ENCODE measurements at regions of chr12 and their contacts with region 1.

Region 1: DNA sequence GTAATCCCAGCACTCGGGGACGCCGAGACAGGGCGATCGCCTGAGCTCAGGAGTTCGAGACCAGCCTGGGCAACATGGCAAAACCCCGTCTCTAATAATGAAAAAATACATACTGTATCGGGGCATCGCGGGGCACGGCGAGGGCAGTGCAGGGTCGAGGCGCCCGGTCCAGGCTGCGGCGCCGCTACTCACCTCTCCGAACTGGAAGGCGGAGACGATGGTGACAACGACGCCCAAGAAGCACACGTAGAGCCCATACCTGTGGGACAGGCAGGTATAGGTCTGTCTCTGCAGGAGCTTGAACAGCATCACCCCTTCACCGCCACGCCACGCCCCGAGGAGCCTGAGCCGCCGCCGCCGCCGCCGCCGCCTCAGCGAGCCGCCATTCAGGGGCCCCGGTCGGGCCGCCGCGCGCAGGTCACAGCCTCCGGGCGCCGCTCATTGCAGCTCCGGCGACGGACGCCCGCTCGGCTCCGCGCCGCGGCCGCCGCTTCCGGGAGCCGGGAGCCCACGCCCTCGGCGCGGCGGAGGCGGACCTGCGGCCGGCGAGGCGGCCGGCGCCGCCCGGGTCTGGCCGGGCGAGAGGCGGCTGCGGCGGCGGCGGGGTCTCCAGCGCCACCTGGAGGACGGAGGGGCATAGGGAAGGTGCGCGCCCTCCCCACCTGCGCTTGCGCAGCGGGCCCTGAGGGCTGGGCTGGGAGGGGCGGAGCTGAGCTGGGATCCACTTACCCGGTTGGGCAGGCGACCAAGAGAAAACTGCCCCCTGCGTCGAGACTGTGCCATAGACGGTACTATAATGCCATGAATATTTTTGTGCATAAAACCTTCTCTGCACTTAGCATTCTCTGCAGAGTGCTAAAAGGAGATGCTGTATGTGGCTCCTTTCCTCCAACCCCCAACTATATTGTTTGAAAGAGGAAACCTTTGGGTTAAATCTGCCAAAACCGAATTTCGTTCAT is at the start of gene GNPTAB:
- DNase-seq: peak; percentile 96
- H3K4me3 ChIP-seq: peak within 1 kb of the TSS; percentile 88 to 98 (median 90)
- H3K27ac ChIP-seq: peak within 1 kb of the TSS; percentile 85 to 89 (median 86)
- H3K4me1 ChIP-seq: peaks cover 18 to 50% (median 41%) of the 10 kb centered on the region in 4 donors
- H3K27me3 ChIP-seq: no peaks in the 10 kb centered on the region
- CTCF ChIP-seq: peak; percentile 79 to 94 (median 86)
- EP300 ChIP-seq: no peak
- POLR2A ChIP-seq: no peak
- total RNA-seq, gene GNPTAB: 30.5 to 37.0 (median 32.1) TPM

Region 2: GRCh38 chr12:101697197-101697929 is 133.3 kb before region 1 on chr12 and contains the start of gene CHPT1:
- intact Hi-C with region 1: loop called (anchors 2 kb)
- DNase-seq: peak; percentile 94
- H3K4me3 ChIP-seq: peak within 1 kb of the TSS; percentile 70 to 94 (median 90)
- H3K27ac ChIP-seq: peak within 1 kb of the TSS; percentile 89 to 97 (median 96)
- H3K4me1 ChIP-seq: peaks cover 51 to 61% (median 56%) of the 10 kb centered on the region in 4 donors
- H3K27me3 ChIP-seq: no peaks in the 10 kb centered on the region
- CTCF ChIP-seq: no peak
- EP300 ChIP-seq: no peak
- POLR2A ChIP-seq: no peak
- total RNA-seq, gene CHPT1: 57.5 to 180 (median 83.8) TPM

Region 3: DNA sequence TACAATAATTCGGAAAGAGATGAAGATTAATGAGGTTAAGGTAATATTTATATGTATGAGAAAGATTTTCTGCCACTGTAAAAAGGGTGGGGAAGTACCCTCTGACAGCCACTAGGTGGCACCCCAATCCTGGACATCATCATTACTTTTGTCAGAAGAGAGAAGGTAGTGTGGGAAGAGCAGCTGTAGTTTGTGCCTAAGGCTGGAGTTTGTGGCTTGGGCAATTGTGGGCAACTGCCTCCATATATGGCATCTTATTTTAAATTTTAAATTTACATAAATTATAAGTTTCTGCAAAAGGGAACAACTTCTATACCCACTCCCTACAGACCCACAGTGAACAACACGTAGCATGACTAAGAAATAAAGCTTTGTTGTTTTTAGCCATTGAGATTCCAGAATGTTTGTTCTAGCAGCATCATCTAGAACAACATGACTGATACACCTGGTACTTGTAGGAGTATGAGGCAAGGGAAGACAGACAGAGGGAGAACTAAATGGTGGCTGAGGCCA is 56.9 kb before region 1 on chr12:
- intact Hi-C with region 1: loop called (anchors 2 kb)
- DNase-seq: no peak
- H3K4me3 ChIP-seq: no peak overlapping the region
- H3K27ac ChIP-seq: no peak overlapping the region
- H3K4me1 ChIP-seq: peaks cover 0 to 16% (median 13%) of the 10 kb centered on the region in 4 donors
- H3K27me3 ChIP-seq: no peaks in the 10 kb centered on the region
- CTCF ChIP-seq: peak; percentile 96 to 98 (median 97)
- EP300 ChIP-seq: no peak
- POLR2A ChIP-seq: no peak

Region 4: GRCh38 chr12:101792051-101792931 is 38.4 kb before region 1 on chr12:
- intact Hi-C with region 1: loop called (anchors 5 kb)
- DNase-seq: no peak
- H3K4me3 ChIP-seq: no peak overlapping the region
- H3K27ac ChIP-seq: no peak overlapping the region
- H3K4me1 ChIP-seq: peaks cover 0 to 19% (median 11%) of the 10 kb centered on the region in 4 donors
- H3K27me3 ChIP-seq: no peaks in the 10 kb centered on the region
- CTCF ChIP-seq: peak; percentile 33 to 48 (median 38)
- EP300 ChIP-seq: no peak
- POLR2A ChIP-seq: no peak

Region 5: DNA sequence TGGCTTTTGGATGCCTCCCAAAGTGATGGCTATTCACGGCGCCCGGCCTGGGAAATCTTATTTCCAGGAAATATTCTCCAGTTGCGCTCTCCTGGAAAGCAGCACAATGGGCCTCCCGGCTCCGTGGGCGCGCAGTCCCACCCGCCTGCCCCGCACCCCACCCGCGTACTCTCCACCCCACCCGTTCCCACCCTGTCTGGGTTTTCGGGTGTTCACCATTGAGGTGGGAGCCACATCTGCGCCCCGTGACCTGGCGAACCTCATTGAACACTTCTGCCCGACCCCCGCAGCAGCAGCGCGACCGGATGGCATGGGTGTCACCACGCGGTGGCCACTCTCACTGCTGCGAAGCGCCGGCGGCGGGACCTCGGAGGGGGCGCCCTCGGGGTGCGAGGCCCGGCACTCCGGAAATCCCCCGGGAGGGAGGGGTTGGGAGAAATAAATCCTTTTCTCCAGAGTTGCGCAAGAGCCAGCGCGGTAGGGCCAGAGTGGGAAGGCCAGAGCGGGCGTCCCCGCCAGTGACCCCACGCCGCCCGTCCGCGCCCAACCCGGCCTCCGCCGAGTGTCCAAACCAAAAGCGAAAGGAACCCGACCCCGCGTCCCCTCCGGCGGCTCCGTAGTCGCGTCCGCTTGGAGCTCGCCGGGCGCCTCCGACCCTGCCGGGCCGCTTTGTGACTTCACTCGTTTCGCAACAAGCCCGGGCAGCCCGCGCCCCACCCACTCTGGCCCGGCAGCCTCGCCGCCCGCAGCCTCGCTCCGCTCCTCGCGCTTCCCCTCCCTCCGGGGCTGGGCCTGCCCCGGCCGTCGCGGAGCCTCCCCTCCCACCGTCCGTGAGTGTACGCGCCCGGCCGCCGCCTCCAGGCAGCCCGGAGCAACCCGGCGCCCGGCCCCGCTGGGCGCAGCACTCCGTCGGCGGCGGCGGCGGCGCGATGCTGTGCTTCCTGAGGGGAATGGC is 46.5 kb after region 1 on chr12 and contains the start of gene DRAM1:
- intact Hi-C with region 1: loop called (anchors 2 kb)
- DNase-seq: peak; percentile 96
- H3K4me3 ChIP-seq: peak within 1 kb of the TSS; percentile 73 to 92 (median 79)
- H3K27ac ChIP-seq: peak within 1 kb of the TSS; percentile 94 to 99 (median 95)
- H3K4me1 ChIP-seq: peaks cover 0 to 27% (median 26%) of the 10 kb centered on the region in 4 donors
- H3K27me3 ChIP-seq: no peaks in the 10 kb centered on the region
- CTCF ChIP-seq: peak in 1 of 3 experiments; percentile 8
- EP300 ChIP-seq: no peak
- POLR2A ChIP-seq: peak; percentile 74
- total RNA-seq, gene DRAM1: 10.0 to 24.9 (median 17.8) TPM

Measured in esophagus muscularis mucosa (tissue), 4 donors.